ENCODE measurements at regions of chr20 and their contacts with region 1.

Region 1: DNA sequence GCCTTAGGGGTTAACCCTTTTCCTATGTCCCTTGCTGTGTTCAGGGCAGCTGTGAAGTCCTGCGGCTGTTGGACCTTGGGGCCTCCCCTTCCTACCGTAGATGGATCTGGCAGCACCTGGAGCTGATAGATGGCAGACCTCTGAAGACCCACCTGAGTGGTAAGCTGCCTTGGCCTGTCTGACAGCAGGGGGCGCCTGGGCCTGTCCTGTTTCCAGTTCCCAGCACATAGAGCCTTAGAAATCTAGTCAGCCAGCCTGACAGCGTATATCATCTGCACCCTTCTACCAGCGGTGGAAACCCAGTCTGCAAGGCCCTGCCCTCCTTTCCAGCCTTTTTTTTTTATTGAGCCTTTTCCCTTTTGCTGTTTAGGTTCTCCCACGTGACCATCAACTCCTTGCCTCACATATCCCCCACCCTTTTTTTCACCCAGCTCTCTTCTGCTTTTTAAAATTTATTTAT is 26.6 kb downstream of the CNBD2 start:
- DNase-seq: peak; percentile 59 to 87 (median 66)
- H3K4me3 ChIP-seq: no peak overlapping the region
- H3K4me3 Mint-ChIP-seq: no peak overlapping the region
- H3K27ac ChIP-seq: no peak overlapping the region
- H3K27ac Mint-ChIP-seq: peak overlapping the region in 3 of 8 donors; percentile 39 to 88 (median 60)
- H3K4me1 ChIP-seq: no peaks in the 10 kb centered on the region
- H3K4me1 Mint-ChIP-seq: peaks cover 5 to 10% (median 7%) of the 10 kb centered on the region in 3 donors
- H3K27me3 ChIP-seq: no peaks in the 10 kb centered on the region
- H3K27me3 Mint-ChIP-seq: peaks cover 0 to 6% of the 10 kb centered on the region in 2 donors

Region 2: DNA sequence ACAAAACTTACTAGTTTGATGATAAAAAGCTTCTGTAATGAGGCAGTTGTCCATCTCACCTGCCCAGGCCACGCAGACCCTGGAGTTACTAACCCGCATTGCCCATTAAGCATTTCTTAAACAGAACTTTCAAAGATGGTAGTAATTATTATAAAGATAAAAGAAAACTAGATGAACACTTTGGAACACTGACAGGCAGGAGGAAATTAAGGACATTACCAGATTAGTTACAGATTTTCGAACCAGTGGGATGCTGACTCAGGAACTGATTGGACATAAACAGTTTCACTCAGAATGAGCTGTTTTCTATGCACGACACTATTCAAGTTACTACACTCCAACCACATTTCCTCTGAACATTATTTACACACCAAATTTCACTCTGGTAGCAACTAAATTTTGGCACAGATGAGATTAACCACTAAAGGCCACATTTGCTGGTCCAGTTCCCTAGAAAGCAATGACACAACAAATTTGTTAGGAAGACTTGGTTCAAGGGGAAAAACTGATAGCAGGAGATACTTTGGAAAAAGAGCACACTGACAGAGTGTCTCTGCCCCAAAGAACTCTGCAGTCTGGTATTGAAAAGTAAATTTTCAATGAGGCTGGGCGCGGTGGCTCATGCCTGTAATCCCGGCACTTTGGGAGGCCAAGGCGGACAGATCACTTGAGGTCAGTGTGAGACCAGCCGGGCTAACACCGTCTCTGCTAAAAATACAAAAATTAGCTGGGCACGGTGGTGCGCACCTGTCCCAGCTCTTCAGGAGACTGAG is 292.8 kb before region 1 on chr20:
- CTCF ChIA-PET with region 1: no interaction called
- POLR2A ChIA-PET with region 1: no interaction called
- DNase-seq: peak in 1 of 5 donors; percentile 43
- H3K4me3 ChIP-seq: no peak overlapping the region
- H3K4me3 Mint-ChIP-seq: peak overlapping the region in 4 of 7 donors; percentile 24 to 80 (median 41)
- H3K27ac ChIP-seq: no peak overlapping the region
- H3K27ac Mint-ChIP-seq: peak overlapping the region; percentile 10 to 92 (median 62)
- H3K4me1 ChIP-seq: peaks cover 21% of the 10 kb centered on the region
- H3K4me1 Mint-ChIP-seq: peaks cover 36 to 53% (median 52%) of the 10 kb centered on the region in 3 donors
- H3K27me3 ChIP-seq: no peaks in the 10 kb centered on the region
- H3K27me3 Mint-ChIP-seq: peaks cover 0 to 4% of the 10 kb centered on the region in 2 donors

Region 3: DNA sequence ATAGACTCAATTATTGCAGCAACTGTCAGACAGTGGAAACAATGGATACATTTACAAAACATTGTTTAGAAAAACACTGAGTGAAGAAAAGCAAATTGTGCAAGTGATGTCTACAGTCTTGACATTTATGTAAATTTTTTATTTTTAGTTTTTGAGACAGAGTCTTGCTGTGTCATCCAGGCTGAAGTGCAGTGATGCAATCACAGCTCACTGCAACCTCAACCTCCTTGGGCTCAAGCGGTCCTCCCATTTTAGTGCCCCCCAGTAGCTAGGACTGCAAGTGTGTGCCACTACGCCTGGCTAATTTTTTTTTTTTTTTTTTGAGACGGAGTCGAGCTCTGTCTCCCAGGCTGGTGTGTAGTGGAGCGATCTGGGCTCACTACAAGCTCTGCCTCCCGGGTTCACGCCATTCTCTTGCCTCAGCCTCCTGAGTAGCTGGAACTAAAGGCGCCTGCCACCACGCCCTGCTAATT is 16.9 kb before region 1 on chr20:
- CTCF ChIA-PET with region 1: interaction called, 20 read pairs
- POLR2A ChIA-PET with region 1: no interaction called
- DNase-seq: no peak
- H3K4me3 ChIP-seq: no peak overlapping the region
- H3K4me3 Mint-ChIP-seq: no peak overlapping the region
- H3K27ac ChIP-seq: no peak overlapping the region
- H3K27ac Mint-ChIP-seq: no peak overlapping the region
- H3K4me1 ChIP-seq: no peaks in the 10 kb centered on the region
- H3K4me1 Mint-ChIP-seq: no peaks in the 10 kb centered on the region
- H3K27me3 ChIP-seq: no peaks in the 10 kb centered on the region
- H3K27me3 Mint-ChIP-seq: peaks cover 7 to 12% of the 10 kb centered on the region in 2 donors

Region 4: DNA sequence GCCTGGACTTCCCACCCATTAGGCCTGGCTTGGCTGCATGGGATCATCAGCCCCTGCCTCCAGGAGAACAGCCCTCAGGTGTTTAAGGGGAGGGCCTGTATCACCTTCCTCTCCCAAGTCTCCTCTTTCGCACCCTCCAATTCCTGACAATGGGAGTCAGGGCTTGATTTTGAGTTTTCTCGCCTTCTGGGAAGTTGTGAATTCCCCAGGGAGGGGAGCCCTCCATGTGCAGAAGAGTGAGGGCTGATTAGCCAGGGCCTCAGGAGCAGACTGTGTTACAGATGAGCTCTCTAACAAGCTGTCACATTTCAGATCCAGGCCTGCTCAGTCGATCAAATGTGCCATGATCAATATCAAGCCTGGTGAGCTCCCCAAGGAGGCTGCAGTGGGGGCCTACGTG is 15.8 kb after region 1 on chr20:
- CTCF ChIA-PET with region 1: interaction called, 23 read pairs
- POLR2A ChIA-PET with region 1: no interaction called
- DNase-seq: no peak
- H3K4me3 ChIP-seq: no peak overlapping the region
- H3K4me3 Mint-ChIP-seq: no peak overlapping the region
- H3K27ac ChIP-seq: no peak overlapping the region
- H3K27ac Mint-ChIP-seq: no peak overlapping the region
- H3K4me1 ChIP-seq: no peaks in the 10 kb centered on the region
- H3K4me1 Mint-ChIP-seq: no peaks in the 10 kb centered on the region
- H3K27me3 ChIP-seq: no peaks in the 10 kb centered on the region
- H3K27me3 Mint-ChIP-seq: peaks cover 0 to 12% of the 10 kb centered on the region in 2 donors

Region 5: DNA sequence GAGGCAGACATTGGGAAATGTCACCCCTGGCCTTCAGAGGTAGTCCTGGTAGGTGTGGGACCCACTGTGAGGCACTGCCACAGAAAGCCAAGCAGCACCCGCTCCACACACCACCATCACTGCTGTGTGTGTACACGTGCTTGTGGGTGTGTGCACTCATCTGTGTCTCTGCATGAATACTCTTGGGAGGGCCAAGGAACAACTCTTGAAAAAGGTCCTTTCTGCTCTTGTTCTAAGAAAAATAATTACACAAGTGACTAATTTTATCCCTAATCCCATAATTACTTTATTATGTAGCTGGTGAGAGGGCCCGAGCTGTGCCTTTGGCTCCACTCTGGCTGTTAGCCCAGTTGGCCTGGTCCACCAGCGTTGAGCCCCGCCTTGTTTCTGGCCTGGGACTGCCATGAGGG is 137.8 kb after region 1 on chr20:
- CTCF ChIA-PET with region 1: interaction called, 193 read pairs
- POLR2A ChIA-PET with region 1: no interaction called
- DNase-seq: no peak
- H3K4me3 ChIP-seq: no peak overlapping the region
- H3K4me3 Mint-ChIP-seq: no peak overlapping the region
- H3K27ac ChIP-seq: no peak overlapping the region
- H3K27ac Mint-ChIP-seq: no peak overlapping the region
- H3K4me1 ChIP-seq: no peaks in the 10 kb centered on the region
- H3K4me1 Mint-ChIP-seq: no peaks in the 10 kb centered on the region
- H3K27me3 ChIP-seq: no peaks in the 10 kb centered on the region
- H3K27me3 Mint-ChIP-seq: peaks cover 0 to 1% of the 10 kb centered on the region in 2 donors

Region 6: DNA sequence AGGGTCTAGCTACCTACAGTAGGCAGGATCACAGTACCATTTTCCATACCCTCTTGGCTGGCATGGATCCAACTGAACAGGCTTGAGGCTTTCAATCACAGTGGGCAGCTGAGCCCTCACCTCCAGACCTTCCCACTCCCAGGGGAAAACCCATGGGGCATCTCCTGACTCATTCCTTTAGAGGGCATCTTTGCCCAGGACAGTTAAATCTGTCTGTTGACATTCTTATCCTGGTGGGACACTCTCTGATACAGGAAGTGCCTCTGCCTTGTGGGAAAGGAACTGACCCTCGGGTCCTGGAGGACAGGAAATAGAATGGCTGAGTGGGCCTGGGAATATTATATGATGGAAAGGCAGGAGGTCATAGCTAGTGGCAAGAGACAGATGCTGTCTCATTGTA is 149.3 kb after region 1 on chr20:
- CTCF ChIA-PET with region 1: interaction called, 193 read pairs
- POLR2A ChIA-PET with region 1: no interaction called
- DNase-seq: no peak
- H3K4me3 ChIP-seq: no peak overlapping the region
- H3K4me3 Mint-ChIP-seq: no peak overlapping the region
- H3K27ac ChIP-seq: no peak overlapping the region
- H3K27ac Mint-ChIP-seq: no peak overlapping the region
- H3K4me1 ChIP-seq: no peaks in the 10 kb centered on the region
- H3K4me1 Mint-ChIP-seq: peaks cover 0 to 4% (median 2%) of the 10 kb centered on the region in 3 donors
- H3K27me3 ChIP-seq: no peaks in the 10 kb centered on the region
- H3K27me3 Mint-ChIP-seq: peaks cover 24 to 63% of the 10 kb centered on the region in 2 donors

Region 7: DNA sequence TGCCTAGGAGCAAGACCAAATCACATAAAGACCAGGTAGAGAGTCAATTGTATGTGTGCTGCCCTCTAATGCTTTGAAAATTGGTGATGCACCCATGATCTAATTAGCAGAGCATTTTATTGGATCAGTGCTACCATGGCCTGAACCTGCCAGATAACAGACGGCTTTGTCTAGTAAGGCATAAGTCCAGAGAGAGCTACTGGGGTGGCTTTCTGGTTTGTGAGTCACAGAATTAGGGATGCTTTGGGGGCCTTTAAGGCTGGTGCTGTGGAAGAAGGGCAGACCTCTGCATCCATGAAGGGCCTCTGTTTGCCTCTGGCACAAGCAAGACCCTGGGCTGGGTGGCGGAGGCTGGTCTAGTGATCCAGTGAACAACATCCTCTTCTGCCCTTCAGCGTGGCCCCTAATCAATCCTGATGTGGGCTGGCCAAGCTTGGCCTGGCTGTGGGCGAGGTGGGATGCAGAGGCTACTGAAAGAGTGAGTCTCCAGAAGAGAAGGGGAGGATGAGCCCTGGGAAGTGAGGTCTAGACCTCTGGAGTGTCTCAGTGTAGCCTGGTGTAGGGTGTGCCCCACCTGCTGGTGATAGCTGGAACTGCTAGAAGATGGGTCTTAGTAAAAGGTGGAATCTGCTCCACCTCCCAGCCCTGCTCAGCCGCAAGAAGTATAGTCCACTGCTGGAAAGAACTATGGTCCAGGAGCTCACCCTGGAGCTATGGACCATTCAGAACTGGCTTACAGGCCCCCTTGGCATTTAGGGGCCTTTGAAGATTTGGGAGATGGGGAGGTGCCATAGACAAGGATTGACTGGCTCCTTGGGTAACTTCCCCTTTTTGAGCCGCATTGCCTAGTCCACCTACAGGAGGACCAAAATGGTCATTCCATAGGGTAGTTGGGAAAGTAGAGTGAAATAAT is 204.6 kb after region 1 on chr20:
- CTCF ChIA-PET with region 1: interaction called, 13 read pairs
- POLR2A ChIA-PET with region 1: no interaction called
- DNase-seq: peak; percentile 30 to 78 (median 55)
- H3K4me3 ChIP-seq: no peak overlapping the region
- H3K4me3 Mint-ChIP-seq: no peak overlapping the region
- H3K27ac ChIP-seq: no peak overlapping the region
- H3K27ac Mint-ChIP-seq: peak overlapping the region in 1 of 8 donors; percentile 72
- H3K4me1 ChIP-seq: peaks cover 7% of the 10 kb centered on the region
- H3K4me1 Mint-ChIP-seq: peaks cover 4 to 6% (median 6%) of the 10 kb centered on the region in 3 donors
- H3K27me3 ChIP-seq: no peaks in the 10 kb centered on the region
- H3K27me3 Mint-ChIP-seq: peaks cover 8 to 15% of the 10 kb centered on the region in 2 donors

Measured in CD8-positive, alpha-beta memory T cell (primary cell).